ENCODE measurements at regions of chr2 and their contacts with region 1.

Region 1: DNA sequence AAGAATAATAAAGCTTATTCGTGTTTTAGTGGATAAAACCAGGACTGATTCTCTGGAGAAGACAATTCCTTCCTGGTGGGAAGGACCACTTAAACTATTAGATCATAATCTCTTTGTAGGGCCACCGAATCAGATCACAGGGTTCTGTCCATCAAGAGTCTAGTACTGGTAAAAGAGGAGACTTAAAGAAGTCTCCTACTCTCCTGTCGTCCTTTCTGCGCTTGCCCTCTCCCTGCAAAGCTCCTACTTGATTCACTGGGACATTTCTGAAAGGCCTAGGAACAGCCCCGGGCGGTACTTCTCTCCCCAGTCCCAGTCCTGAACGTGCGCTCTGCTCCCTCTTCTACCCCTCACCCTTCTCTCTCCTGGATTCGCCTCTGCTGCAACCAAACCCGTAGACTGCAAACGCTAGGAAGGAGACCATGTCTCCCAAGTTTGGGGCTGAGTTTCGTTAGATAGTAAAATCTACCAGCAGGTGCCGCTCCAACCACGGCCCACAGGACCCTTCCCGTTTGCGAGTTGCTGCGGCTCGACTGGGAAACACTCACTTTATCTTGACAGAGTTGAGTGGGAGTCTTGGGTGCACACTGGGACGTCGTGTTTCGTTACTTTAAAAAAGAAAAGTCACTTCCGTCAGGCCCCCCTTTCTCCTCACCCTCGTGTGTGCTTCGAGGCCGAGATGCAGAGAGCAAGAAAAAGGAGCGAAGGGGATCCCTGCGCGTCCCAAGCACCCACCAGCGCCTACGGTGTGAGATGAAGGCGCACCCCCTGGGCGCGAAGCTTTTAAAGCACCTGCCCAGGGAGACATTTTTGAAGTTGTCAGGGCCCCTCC is 923 bp downstream of the FIGLA start:
- DNase-seq: peak; percentile 58
- ATAC-seq: peak; percentile 96
- H3K4me3 ChIP-seq: no peak overlapping the region
- H3K27ac ChIP-seq: no peak overlapping the region
- H3K4me1 ChIP-seq: peaks cover 18% of the 10 kb centered on the region
- H3K27me3 ChIP-seq: peaks cover 0 to 5% of the 10 kb centered on the region in 2 experiments; a peak in 1 of 5 replicates
- CTCF ChIP-seq: peak; percentile 99
- EP300 ChIP-seq: no peak
- POLR2A ChIP-seq: no peak
- RAD21 ChIP-seq: peak; percentile 95

Region 2: DNA sequence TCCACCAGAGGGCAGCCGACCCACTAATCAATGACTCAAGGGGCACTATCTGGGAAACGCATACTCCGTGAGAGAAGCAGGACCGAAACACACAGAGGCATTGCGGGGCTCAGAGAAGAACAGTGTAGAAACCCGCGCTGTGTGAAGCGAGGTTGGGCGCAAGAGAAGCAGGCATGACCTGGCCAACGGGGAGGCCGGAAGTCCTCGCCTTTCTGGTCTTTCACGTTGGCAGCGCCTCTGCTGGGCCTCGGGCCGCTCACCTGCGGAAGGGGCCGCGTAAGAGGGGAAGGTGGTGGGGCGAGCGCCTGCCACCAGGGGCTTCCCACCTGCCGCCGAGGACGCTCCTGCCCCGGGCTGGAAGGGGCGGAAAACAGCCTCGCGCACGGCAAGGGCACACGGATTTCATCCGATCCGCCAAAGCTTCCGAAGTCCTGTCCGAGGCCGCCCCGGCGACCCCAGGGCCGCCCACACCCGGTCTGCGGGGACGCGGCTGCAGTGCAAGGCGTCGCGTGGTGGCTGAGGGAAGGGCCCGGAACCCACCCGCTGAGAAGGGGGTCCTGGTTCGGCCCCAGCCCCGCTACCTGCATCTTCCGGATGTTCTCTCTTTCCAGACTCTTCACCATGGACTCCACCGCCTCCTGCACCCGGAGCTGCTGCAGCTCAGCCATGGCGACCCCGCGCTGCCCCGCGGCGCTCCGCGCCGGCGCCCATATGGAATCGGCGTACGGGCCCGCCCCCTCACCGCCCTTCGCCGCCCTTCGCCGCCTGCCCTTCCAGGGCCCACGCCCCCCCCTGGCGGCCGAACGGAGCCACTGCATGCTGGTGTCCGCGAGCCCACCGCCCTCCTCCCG is 488.0 kb before region 1 on chr2 and contains the start of gene FAM136A:
- CTCF ChIA-PET with region 1: interaction called, 8 read pairs
- POLR2A ChIA-PET with region 1: no interaction called
- in situ Hi-C with region 1: no loop called
- intact Hi-C with region 1: loop called (anchors 5 kb)
- DNase-seq: peak; percentile 87
- ATAC-seq: peak; percentile 94
- H3K4me3 ChIP-seq: peak within 1 kb of the TSS; percentile 62 to 92 (median 90)
- H3K27ac ChIP-seq: peak within 1 kb of the TSS; percentile 85
- H3K4me1 ChIP-seq: peaks cover 21% of the 10 kb centered on the region
- H3K27me3 ChIP-seq: peaks cover 0 to 7% of the 10 kb centered on the region in 2 experiments; a peak in 2 of 5 replicates
- CTCF ChIP-seq: peak; percentile 91
- EP300 ChIP-seq: 0 out of 4 replicates have a peak, but pooled peaks have one; percentile 17 to 29
- POLR2A ChIP-seq: peak; percentile 92 to 96
- RAD21 ChIP-seq: peak; percentile 70
- total RNA-seq, gene FAM136A: 126 and 153 TPM in 2 replicates

Region 3: GRCh38 chr2:70686577-70687460 is 102.7 kb before region 1 on chr2:
- CTCF ChIA-PET with region 1: interaction called, 4 read pairs
- POLR2A ChIA-PET with region 1: no interaction called
- in situ Hi-C with region 1: no loop called
- intact Hi-C with region 1: loop called (anchors 1 kb)
- DNase-seq: peak; percentile 48
- ATAC-seq: peak; percentile 98
- H3K4me3 ChIP-seq: no peak overlapping the region
- H3K27ac ChIP-seq: no peak overlapping the region
- H3K4me1 ChIP-seq: peaks cover 4% of the 10 kb centered on the region; the same call in 1 of the 2 replicates
- H3K27me3 ChIP-seq: peaks cover 0 to 28% of the 10 kb centered on the region in 2 experiments; a peak in 3 of 5 replicates
- CTCF ChIP-seq: peak; percentile 70
- EP300 ChIP-seq: no peak
- POLR2A ChIP-seq: no peak
- RAD21 ChIP-seq: no peak

Region 4: DNA sequence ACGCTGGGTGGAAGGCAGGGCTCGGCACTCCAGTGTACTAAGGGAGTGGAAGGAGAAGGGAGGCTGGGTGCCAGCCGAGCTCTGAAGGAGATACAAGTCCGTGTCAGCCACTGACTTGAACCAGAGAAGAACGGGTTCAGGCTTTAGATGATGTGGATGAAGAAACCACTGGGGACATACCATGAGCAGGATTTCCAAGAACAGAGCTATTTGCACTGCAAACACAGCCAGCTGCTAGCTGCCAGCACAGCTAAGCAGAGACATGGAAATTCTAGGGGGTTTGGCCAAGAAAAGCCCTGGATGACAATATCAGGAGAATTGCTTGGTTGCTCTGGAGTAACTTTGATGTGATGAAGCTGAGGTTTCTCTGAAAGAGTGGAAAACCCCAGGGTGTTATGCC is 40.8 kb after region 1 on chr2:
- CTCF ChIA-PET with region 1: no interaction called
- POLR2A ChIA-PET with region 1: no interaction called
- in situ Hi-C with region 1: no loop called
- intact Hi-C with region 1: no loop called
- DNase-seq: no peak
- ATAC-seq: peak; percentile 65
- H3K4me3 ChIP-seq: no peak overlapping the region
- H3K27ac ChIP-seq: no peak overlapping the region
- H3K4me1 ChIP-seq: peaks cover 20% of the 10 kb centered on the region
- H3K27me3 ChIP-seq: peaks cover 5 to 39% of the 10 kb centered on the region in 2 experiments; a peak in 4 of 5 replicates
- CTCF ChIP-seq: no peak
- EP300 ChIP-seq: no peak
- POLR2A ChIP-seq: no peak
- RAD21 ChIP-seq: no peak

Region 5: DNA sequence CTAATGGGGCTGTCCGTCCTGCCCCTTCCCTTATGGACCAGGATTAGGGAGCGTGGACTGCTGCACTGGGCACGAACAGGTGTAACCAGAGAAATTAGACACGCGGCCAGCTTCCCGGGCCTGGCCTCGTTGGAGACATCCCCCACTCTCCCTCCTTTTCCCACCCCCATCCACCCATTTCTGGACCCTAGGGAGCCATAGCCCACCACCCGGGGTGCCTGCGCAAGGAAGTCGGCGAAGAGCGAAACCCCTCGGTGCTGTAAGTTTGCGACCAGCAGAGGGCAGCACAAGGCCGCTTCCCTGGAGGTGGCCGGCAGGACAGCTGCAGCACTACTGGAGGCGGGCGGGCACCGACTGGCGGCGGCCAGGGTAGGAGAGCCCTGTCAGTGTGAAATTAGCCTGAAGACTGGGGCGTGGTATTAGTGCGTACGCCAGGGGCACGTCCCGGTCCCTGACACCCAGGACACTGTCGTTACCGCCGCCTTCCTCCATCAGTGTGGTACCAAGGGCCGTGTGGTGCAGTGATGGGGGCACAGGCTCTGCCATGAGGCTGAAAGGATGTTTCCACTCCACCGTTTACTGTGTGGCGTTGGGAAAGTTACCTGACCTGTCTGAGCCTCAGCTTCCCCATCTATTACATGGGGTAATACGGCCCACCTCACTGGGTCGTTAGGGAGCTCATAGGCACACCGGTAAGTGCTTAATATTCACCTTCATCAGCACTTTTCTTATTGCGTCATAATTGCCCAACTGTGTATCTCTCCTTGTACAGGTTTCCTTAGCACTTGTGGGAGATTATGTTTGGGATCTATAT is 82.1 kb after region 1 on chr2:
- CTCF ChIA-PET with region 1: interaction called, 34 read pairs
- POLR2A ChIA-PET with region 1: no interaction called
- in situ Hi-C with region 1: no loop called
- intact Hi-C with region 1: loop called (anchors 1 kb)
- DNase-seq: peak; percentile 74
- ATAC-seq: peak; percentile 98
- H3K4me3 ChIP-seq: peak overlapping the region in 1 of 3 experiments; percentile 45; a peak in 1 of 6 replicates
- H3K27ac ChIP-seq: no peak overlapping the region
- H3K4me1 ChIP-seq: peaks cover 10% of the 10 kb centered on the region
- H3K27me3 ChIP-seq: no peaks in the 10 kb centered on the region; a peak in 1 of 5 replicates
- CTCF ChIP-seq: peak; percentile 100
- EP300 ChIP-seq: no peak
- POLR2A ChIP-seq: no peak
- RAD21 ChIP-seq: peak; percentile 99

Region 6: DNA sequence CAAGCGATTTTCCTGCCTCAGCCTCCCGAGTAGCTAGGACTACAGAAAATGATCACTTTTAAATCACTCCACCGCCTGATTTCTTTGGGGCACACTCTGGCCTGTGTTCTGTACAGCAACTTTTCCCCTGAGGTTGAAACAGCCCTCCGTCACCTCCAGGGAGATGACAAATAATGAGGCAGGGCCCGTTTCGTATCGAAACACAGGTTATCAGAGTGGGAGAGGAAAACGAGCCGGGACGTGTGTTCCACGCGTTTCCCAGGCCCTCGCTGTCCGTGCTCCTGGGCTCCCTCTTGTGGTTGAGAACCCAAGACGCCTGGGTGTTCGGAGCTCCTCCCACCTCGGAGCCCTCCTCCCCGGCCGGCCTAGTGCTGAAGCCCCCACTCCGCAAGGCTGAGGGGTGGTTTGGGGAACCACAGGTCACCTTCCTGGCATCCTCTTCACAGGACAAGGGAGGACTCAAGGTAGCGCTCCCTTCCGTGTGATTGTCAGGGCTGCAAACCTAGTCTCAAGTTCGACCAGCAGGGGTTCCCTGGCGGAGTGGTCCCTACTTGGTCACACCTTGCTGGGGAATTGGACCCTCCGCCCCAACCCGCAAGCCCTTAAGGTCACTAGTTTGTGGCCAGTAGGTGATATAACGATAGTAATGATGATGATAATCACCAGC is 158.9 kb after region 1 on chr2:
- CTCF ChIA-PET with region 1: interaction called, 17 read pairs
- POLR2A ChIA-PET with region 1: no interaction called
- in situ Hi-C with region 1: loop called (anchors 5 kb)
- intact Hi-C with region 1: loop called (anchors 1 kb)
- DNase-seq: peak; percentile 67
- ATAC-seq: peak; percentile 93
- H3K4me3 ChIP-seq: peak overlapping the region; percentile 10 to 61 (median 53)
- H3K27ac ChIP-seq: no peak overlapping the region
- H3K4me1 ChIP-seq: peaks cover 34% of the 10 kb centered on the region
- H3K27me3 ChIP-seq: peaks cover 0 to 17% of the 10 kb centered on the region in 2 experiments; a peak in 3 of 5 replicates
- CTCF ChIP-seq: peak; percentile 98
- EP300 ChIP-seq: no peak
- POLR2A ChIP-seq: no peak
- RAD21 ChIP-seq: peak; percentile 79